ENCODE measurements at regions of chr12 and their contacts with region 1.

Region 1: DNA sequence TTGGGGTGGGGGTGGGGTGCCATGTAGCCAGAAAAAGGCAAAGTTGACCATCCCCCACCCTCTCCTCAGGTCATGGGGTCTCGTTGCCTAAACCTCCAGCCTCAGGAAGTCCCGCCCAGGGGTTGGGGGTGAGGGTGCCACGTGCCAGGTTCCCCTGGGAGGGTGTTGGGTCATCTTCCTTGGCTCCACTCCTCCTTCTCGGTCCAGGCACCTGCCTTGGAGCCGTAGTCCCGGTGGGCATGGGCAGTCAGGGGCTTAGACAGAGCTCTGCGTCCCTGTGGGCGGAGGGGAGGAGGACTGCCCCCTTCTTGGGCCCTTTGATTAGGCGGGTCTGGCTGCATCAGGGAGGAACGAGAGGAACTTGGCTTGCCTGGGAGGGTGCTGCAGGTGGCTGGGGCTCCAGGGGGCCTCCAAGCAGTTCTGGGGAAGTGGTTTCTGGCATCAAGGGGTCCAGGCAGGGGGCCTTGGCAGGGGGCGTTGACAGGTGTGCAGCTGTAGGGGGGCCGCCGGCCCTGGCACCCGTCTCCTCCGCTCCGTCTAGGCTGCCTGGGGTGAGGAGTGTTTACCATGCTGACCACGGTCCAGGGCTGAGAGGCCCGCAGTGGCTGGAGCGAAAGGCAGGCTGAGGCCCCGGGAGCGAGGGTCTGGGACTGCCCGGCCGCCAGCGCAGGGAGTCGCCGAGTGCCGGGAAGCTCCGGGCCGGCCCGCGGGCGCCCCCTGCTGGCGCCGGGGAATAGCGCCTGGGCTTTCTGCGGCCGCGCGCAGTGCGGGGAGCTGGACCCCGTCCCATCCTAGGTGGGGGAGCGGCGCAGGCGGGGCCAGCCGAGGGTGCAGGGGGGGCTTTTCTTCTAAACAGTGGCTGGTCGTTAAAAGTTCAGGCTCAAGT is 7.9 kb downstream of the SETD1B start:
- DNase-seq: peak in 1 of 2 experiments; percentile 89
- H3K4me3 ChIP-seq: peak overlapping the region; percentile 70 to 83 (median 76)
- H3K27ac ChIP-seq: peak overlapping the region; percentile 42; the same call in 1 of the 2 replicates
- H3K4me1 ChIP-seq: peaks cover 7 to 32% (median 18%) of the 10 kb centered on the region in 4 experiments
- H3K27me3 ChIP-seq: no peaks in the 10 kb centered on the region
- CTCF ChIP-seq: peak in 2 of 3 experiments; percentile 69 to 95; a peak in 3 of 4 replicates
- EP300 ChIP-seq: no peak
- POLR2A ChIP-seq: peak in 1 of 2 experiments; percentile 34; a peak in 2 of 3 replicates
- RAD21 ChIP-seq: peak; percentile 70 to 82

Region 2: GRCh38 chr12:121773011-121773777 is 38.5 kb before region 1 on chr12:
- CTCF ChIA-PET with region 1: interaction called, 11 read pairs
- POLR2A ChIA-PET with region 1: interaction called, 958 read pairs
- DNase-seq: peak in 1 of 2 experiments; percentile 89
- H3K4me3 ChIP-seq: no peak overlapping the region
- H3K27ac ChIP-seq: no peak overlapping the region
- H3K4me1 ChIP-seq: peaks cover 0 to 18% (median 14%) of the 10 kb centered on the region in 4 experiments; a peak in 6 of 7 replicates
- H3K27me3 ChIP-seq: no peaks in the 10 kb centered on the region
- CTCF ChIP-seq: peak; percentile 95 to 98 (median 96)
- EP300 ChIP-seq: no peak
- POLR2A ChIP-seq: no peak
- RAD21 ChIP-seq: peak; percentile 91 to 95

Region 3: DNA sequence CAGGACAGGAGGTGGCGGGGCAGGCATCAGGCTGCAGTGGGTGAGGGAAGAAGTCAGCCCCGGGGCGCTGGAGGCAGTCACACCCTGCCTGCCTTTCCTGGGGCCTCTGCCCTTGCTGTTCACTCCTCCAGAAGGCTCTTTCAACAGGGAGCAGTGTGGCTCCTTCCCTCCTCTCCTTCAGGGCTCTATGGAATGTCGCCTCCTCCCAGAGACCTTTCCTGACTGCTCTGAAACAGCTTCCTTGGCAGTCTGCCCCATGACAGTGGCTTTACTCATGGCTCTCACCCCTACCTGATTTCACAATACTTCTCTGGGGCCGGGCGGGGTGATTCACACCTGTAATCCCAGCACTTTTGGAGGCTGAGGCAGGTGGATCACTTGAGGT is 25.2 kb before region 1 on chr12:
- CTCF ChIA-PET with region 1: interaction called, 363 read pairs
- POLR2A ChIA-PET with region 1: interaction called, 958 read pairs
- DNase-seq: no peak
- H3K4me3 ChIP-seq: no peak overlapping the region
- H3K27ac ChIP-seq: no peak overlapping the region
- H3K4me1 ChIP-seq: peaks cover 0 to 6% (median 3%) of the 10 kb centered on the region in 4 experiments; a peak in 2 of 7 replicates
- H3K27me3 ChIP-seq: no peaks in the 10 kb centered on the region
- CTCF ChIP-seq: no peak
- EP300 ChIP-seq: no peak
- POLR2A ChIP-seq: no peak
- RAD21 ChIP-seq: no peak

Region 4: DNA sequence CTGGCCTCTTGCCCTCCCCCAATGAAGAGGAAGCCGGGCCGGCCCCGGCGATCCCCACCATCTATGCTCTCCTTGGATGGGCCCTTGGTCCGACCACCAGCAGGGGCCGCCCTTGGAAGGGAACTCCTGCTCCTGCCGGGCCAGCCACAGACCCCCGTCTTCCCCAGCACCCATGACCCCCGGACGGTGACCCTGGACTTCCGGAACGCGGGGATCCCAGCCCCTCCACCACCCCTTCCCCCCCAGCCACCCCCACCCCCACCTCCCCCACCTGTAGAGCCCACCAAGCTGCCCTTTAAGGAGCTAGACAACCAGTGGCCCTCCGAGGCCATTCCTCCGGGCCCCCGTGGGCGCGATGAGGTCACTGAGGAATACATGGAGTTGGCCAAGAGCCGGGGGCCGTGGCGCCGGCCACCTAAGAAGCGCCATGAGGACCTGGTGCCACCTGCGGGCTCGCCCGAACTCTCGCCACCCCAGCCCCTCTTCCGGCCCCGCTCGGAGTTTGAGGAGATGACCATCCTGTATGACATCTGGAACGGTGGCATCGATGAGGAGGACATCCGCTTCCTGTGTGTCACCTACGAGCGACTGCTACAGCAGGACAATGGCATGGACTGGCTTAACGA is 11.5 kb after region 1 on chr12:
- CTCF ChIA-PET with region 1: interaction called, 22 read pairs
- POLR2A ChIA-PET with region 1: interaction called, 40 read pairs
- DNase-seq: no peak
- H3K4me3 ChIP-seq: no peak overlapping the region
- H3K27ac ChIP-seq: no peak overlapping the region
- H3K4me1 ChIP-seq: no peaks in the 10 kb centered on the region
- H3K27me3 ChIP-seq: no peaks in the 10 kb centered on the region
- CTCF ChIP-seq: peak; percentile 28 to 54 (median 37); a peak in 3 of 4 replicates
- EP300 ChIP-seq: no peak
- POLR2A ChIP-seq: no peak
- RAD21 ChIP-seq: peak; percentile 36 to 45; a peak in 3 of 4 replicates

Region 5: GRCh38 chr12:121839106-121839992 is 27.7 kb after region 1 on chr12:
- CTCF ChIA-PET with region 1: interaction called, 30 read pairs
- POLR2A ChIA-PET with region 1: interaction called, 12 read pairs
- DNase-seq: peak; percentile 96 to 100
- H3K4me3 ChIP-seq: peak overlapping the region; percentile 65 to 87 (median 75)
- H3K27ac ChIP-seq: peak overlapping the region; percentile 75; the same call in 1 of the 2 replicates
- H3K4me1 ChIP-seq: no peaks in the 10 kb centered on the region; a peak in 2 of 7 replicates
- H3K27me3 ChIP-seq: no peaks in the 10 kb centered on the region
- CTCF ChIP-seq: peak; percentile 29 to 48 (median 40)
- EP300 ChIP-seq: no peak
- POLR2A ChIP-seq: peak; percentile 59 to 75
- RAD21 ChIP-seq: peak in 1 of 2 experiments; percentile 24; a peak in 1 of 4 replicates

Region 6: GRCh38 chr12:121888478-121889266 is 77.0 kb after region 1 on chr12 and contains the start of gene PSMD9:
- CTCF ChIA-PET with region 1: interaction called, 21 read pairs
- POLR2A ChIA-PET with region 1: interaction called, 6 read pairs
- DNase-seq: peak; percentile 94 to 99
- H3K4me3 ChIP-seq: peak within 1 kb of the TSS; percentile 64 to 79 (median 74)
- H3K27ac ChIP-seq: peak within 1 kb of the TSS; percentile 83; the same call in 1 of the 2 replicates
- H3K4me1 ChIP-seq: peaks cover 0 to 5% (median 1%) of the 10 kb centered on the region in 4 experiments; a peak in 4 of 7 replicates
- H3K27me3 ChIP-seq: peaks cover 0 to 2% (median 1%) of the 10 kb centered on the region in 4 experiments; a peak in 3 of 7 replicates
- CTCF ChIP-seq: peak; percentile 59 to 83 (median 75)
- EP300 ChIP-seq: peak in 1 of 2 experiments; percentile 86; a peak in 1 of 3 replicates
- POLR2A ChIP-seq: peak in 1 of 2 experiments; percentile 75; a peak in 2 of 3 replicates
- RAD21 ChIP-seq: peak; percentile 52 to 68
- total RNA-seq, gene PSMD9: 28.8 and 33.1 TPM in 2 replicates

Region 7: DNA sequence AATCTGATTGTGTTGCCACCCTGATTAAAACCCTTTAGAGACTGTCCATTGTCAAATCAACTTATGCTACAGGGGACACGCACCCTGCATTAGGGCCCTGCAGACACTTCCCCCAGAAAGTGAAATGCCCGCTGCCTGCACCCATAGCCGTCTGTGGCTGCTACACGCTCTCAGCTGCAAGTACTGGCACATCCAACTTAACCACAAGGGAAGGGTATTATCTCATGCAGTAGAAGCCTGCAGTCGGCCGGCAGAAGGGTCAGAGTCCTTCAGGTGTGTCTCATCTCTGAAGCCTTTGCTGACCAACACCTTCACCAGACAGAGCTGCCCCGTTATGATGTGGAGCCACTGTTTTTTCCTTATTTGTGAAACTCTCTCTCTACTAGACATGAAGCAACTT is 127.5 kb after region 1 on chr12:
- CTCF ChIA-PET with region 1: no interaction called
- POLR2A ChIA-PET with region 1: no interaction called
- DNase-seq: no peak
- H3K4me3 ChIP-seq: no peak overlapping the region
- H3K27ac ChIP-seq: no peak overlapping the region
- H3K4me1 ChIP-seq: peaks cover 0 to 1% (median 0%) of the 10 kb centered on the region in 4 experiments; a peak in 4 of 7 replicates
- H3K27me3 ChIP-seq: no peaks in the 10 kb centered on the region
- CTCF ChIP-seq: no peak
- EP300 ChIP-seq: no peak
- POLR2A ChIP-seq: no peak
- RAD21 ChIP-seq: no peak

Region 8: GRCh38 chr12:121980191-121980891 is 168.7 kb after region 1 on chr12:
- CTCF ChIA-PET with region 1: no interaction called
- POLR2A ChIA-PET with region 1: no interaction called
- DNase-seq: no peak
- H3K4me3 ChIP-seq: no peak overlapping the region
- H3K27ac ChIP-seq: no peak overlapping the region
- H3K4me1 ChIP-seq: no peaks in the 10 kb centered on the region; a peak in 1 of 7 replicates
- H3K27me3 ChIP-seq: no peaks in the 10 kb centered on the region
- CTCF ChIP-seq: no peak
- EP300 ChIP-seq: no peak
- POLR2A ChIP-seq: no peak
- RAD21 ChIP-seq: no peak